ENCODE measurements at regions of chr2 and their contacts with region 1.

Region 1: GRCh38 chr2:101704046-101704466 is 6.5 kb downstream of the MAP4K4 start:
- DNase-seq: peak; percentile 83

Region 2: DNA sequence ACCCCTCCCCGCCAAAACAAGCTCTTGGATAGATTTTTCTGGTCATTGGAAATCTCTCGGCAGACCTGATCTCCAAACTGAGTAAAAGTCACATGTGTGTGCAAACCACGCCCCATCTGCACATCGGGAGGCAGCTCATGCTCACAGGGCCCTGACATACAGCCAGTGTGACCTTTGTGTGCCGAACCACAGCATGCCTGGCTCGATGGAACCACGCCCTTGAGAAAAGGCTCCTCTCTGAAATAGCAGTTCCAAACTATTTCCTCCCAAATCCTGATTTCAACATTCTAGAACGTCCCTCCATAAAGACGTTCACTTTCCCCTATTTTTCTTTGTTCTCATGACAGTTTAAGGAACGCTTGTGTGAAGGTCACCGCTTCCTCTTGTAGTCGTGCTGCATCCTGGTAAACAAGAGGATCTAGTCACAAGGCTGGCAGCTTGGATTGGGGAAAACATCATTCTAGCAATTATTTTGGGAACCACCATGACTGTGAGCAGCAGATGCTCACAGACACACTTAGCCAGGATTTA is 65.8 kb before region 1 on chr2:
- intact Hi-C with region 1: no loop called
- DNase-seq: no peak

Region 3: GRCh38 chr2:101751875-101752619 is 48.0 kb after region 1 on chr2:
- intact Hi-C with region 1: loop called in 1 of 2 experiments (anchors 10 kb)
- DNase-seq: no peak

Region 4: DNA sequence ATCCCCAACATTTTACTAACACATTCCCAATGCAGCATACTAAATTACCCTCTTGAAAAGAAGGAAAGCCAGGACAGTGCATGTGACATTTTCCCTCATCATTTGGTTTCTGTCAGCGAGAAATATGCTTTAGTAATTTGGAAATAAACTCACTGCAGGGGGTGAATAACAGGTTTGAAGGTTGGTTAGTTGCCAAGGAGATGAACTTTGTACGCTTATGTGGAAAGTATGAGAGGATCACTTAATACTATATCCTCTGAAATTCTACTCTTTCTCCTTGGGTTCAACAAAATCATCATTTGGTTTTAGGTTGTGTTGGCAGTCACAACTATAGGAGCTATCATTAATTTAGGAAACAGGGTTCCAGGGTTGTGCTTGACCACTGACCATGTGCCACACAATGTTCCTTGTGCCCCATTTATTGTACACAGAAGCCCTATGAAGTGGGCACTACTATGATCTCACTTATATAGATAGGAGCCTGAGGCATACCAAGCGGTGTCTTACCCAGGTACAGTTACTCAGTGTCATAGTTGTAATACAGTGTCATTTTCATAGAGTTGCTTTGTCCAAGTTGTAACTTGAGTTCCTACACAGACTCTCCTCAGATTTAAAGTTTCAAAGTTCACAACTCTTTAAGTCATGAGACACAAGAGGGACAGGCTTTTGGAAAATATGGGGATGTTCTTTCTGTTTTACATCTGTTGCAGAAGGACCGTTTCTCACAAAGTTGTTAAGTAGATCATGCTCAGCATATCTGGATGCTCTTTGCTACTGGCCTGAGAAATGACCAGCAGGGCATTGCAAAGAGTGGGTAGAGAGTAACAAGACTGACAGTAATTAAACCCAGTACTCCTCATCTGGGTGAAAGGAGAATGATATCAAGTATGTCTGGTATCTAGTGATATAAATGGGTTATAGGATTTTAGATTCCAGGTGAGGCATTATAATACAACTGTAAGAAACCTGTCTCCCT is 85.2 kb after region 1 on chr2:
- intact Hi-C with region 1: loop called in 1 of 2 experiments (anchors 5 kb)
- DNase-seq: no peak